Activated T-helper 1 cell treated with anti-CD3 and anti-CD28 coated beads, Interleukin-12 subunit alpha, Interleukin-12 subunit beta, Interleukin-2, Interleukin-4 antibody, amounts not matched to agents 30 ng/mL and 10 ng/mL and 1 ng/mL, durations not matched to agents 14 hours and 24 hours and 36 hours (primary cell): ENCODE measurements at regions of chr12 and their contacts with region 1.

Region 1: GRCh38 chr12:121668750-121669520 is 519 bp downstream of the MORN3 start:
- DNase-seq: peak; percentile 17
- H3K4me3 Mint-ChIP-seq: no peak overlapping the region
- H3K27ac Mint-ChIP-seq: peak overlapping the region; percentile 40
- H3K4me1 Mint-ChIP-seq: peaks cover 44% of the 10 kb centered on the region
- H3K27me3 Mint-ChIP-seq: no peaks in the 10 kb centered on the region

Region 2: GRCh38 chr12:121467115-121467793 is 201.7 kb before region 1 on chr12:
- intact Hi-C with region 1: loop called (anchors 1 kb)
- DNase-seq: peak; percentile 88
- H3K4me3 Mint-ChIP-seq: no peak overlapping the region
- H3K27ac Mint-ChIP-seq: no peak overlapping the region
- H3K4me1 Mint-ChIP-seq: peaks cover 29% of the 10 kb centered on the region
- H3K27me3 Mint-ChIP-seq: peaks cover 8% of the 10 kb centered on the region

Region 3: DNA sequence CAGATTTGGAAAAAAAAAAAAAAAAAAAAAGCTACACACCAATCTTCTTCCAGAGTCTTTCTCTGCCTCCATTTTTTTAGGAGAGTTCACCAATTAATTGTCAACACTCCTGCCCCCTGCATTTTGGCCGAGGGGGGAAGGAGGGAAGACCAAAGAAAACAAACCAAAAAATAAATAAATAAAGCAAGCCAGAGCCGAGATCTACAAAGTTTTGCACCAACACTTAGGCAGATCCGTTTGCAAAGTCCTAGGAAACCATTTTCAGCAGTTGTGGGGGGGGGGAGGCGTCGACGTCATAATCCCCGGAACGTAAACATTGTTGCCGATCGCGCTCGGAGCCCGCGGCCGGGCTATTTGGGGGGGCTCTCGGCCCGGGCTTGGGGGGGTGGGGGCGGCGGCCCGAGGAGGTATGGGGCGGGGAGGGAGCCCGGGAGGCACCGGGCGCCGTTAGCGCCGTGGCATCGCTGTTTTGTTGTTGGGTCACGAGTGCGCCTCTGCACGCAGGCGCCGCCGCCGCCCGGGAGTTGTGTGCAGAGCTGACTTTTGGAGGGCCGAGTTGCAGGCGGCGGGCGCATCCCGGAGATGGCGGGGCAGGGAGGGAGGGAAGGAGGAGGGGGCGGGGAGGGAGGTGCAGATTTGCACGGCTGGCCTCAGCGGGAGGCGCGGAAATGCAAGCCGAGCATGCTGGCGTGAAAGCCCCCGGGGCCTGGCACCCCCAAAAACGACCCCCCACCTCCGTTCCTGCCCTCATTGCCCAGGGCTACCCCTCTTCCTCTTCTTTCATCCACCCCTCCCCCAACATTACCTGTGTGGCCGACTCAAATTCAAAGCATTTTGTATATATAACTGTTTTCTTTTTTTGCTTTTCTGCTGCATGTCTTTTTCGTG is 88.7 kb before region 1 on chr12:
- intact Hi-C with region 1: loop called (anchors 1 kb)
- DNase-seq: peak; percentile 67
- H3K4me3 Mint-ChIP-seq: peak overlapping the region; percentile 98
- H3K27ac Mint-ChIP-seq: peak overlapping the region; percentile 100
- H3K4me1 Mint-ChIP-seq: peaks cover 40% of the 10 kb centered on the region
- H3K27me3 Mint-ChIP-seq: no peaks in the 10 kb centered on the region

Region 4: DNA sequence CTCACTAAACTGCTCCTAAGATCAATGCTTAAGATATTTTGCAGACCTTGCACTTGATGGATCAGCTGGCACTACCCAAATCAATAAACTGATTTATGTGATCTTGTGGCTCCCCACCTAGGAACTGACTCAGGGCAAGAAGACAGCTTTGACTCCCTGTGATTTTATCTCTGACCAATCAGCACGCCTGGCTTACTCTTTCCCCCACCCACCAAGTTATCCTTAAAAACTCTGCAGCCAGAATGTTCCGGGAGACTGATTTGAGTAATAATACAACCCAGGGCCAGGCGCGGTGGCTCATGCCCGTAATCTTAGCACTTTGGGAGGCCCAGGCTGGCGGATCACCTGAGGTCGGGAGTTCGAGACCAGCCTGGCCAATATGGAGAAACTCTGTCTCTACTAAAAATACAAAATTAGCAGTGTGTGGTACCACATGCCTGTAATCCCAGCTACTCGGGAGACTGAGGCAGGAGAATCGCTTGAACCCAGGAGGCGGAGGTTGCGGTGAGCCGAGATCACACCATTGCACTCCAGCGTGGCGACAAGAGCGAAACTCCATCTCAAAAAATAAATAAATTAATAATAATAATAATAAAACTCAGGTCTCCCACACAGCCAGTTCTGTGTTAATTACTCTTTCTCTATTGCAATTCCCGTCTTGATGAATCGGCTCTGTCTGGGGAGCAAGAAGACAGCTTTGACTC is 11.5 kb before region 1 on chr12:
- intact Hi-C with region 1: loop called (anchors 1 kb)
- DNase-seq: peak; percentile 15
- H3K4me3 Mint-ChIP-seq: peak overlapping the region; percentile 26
- H3K27ac Mint-ChIP-seq: peak overlapping the region; percentile 71
- H3K4me1 Mint-ChIP-seq: peaks cover 57% of the 10 kb centered on the region
- H3K27me3 Mint-ChIP-seq: peaks cover 5% of the 10 kb centered on the region

Region 5: DNA sequence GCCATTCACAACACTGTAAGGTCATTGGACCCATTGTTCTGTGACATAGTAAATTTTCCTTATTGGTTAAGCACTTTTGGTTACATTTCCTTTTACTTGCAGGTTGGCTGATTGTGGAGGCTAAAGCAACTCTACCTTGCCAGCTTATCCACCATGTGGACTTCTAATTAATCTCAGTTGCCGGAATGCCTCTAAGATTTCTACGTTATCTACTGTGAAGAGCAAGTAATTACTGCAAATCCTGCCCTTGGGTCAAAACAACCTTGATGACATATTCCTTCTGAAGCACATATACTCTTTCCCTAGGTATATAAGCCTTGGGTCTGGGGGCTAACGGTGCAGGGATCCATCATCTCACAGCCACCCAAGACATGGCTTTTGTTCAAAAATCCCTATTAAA is 20.0 kb after region 1 on chr12:
- intact Hi-C with region 1: loop called (anchors 1 kb)
- DNase-seq: no peak
- H3K4me3 Mint-ChIP-seq: no peak overlapping the region
- H3K27ac Mint-ChIP-seq: no peak overlapping the region
- H3K4me1 Mint-ChIP-seq: peaks cover 10% of the 10 kb centered on the region
- H3K27me3 Mint-ChIP-seq: peaks cover 7% of the 10 kb centered on the region